PC-9 (cell line): ENCODE measurements at regions of chr11 and their contacts with region 1.

Region 1: GRCh38 chr11:13143486-13144297 is 133.9 kb upstream of the BMAL1 start:
- DNase-seq: peak in 1 of 2 experiments; percentile 81
- H3K4me3 ChIP-seq: no peak overlapping the region
- H3K27ac ChIP-seq: no peak overlapping the region
- H3K4me1 ChIP-seq: peaks cover 26% of the 10 kb centered on the region
- H3K27me3 ChIP-seq: no peaks in the 10 kb centered on the region
- CTCF ChIP-seq: no peak

Region 2: DNA sequence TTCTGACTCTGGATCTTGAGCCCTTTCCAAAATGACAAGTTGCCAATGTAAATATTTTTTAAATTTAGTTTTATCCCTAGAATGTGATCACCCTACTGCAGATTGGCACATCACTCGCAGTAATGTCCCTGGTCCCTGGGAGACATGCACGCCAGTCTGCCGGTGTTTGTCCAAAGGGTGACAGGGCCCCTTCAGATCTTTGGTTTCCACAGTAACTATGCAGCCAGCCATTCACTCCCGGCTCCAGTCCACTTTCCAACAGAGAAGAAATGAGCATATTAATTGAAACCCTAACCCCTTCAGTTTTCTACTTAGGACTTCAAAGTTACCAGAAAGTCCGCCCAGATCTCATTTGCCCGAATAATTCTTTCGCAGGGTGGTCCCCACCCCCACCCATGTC is 160.4 kb before region 1 on chr11:
- CTCF ChIA-PET with region 1: interaction called, 12 read pairs
- POLR2A ChIA-PET with region 1: no interaction called
- intact Hi-C with region 1: no loop called
- DNase-seq: no peak
- H3K4me3 ChIP-seq: no peak overlapping the region
- H3K27ac ChIP-seq: no peak overlapping the region
- H3K4me1 ChIP-seq: no peaks in the 10 kb centered on the region
- H3K27me3 ChIP-seq: no peaks in the 10 kb centered on the region
- CTCF ChIP-seq: no peak

Region 3: DNA sequence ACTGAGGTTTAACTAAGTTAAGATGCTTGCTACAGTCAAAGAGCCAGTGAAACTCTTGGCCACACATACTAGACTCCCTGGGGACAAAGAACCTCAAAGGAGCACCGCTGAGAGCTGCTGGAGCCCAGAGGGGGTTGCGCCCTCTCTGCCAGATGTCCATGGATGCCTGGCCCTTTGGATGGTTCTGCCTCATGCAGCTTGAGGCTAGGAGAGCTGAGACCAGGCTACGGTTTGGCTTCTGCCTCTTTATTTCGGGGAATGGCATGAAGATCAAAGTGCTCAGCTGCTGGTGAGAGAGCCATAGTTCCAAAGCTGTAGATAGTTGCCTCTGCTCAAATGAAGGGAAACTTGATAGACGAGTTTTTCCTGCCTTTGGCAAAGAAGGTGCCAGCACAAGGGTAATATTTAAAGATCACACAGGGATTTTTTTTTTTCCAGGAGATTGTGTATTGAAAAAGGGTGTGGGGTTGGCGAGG is 91.5 kb before region 1 on chr11:
- CTCF ChIA-PET with region 1: interaction called, 12 read pairs
- POLR2A ChIA-PET with region 1: no interaction called
- intact Hi-C with region 1: no loop called
- DNase-seq: peak; percentile 18 to 78
- H3K4me3 ChIP-seq: no peak overlapping the region
- H3K27ac ChIP-seq: 0 out of 2 replicates have a peak overlapping the region, but pooled peaks have one; percentile 11
- H3K4me1 ChIP-seq: peaks cover 31% of the 10 kb centered on the region
- H3K27me3 ChIP-seq: no peaks in the 10 kb centered on the region
- CTCF ChIP-seq: no peak

Region 4: DNA sequence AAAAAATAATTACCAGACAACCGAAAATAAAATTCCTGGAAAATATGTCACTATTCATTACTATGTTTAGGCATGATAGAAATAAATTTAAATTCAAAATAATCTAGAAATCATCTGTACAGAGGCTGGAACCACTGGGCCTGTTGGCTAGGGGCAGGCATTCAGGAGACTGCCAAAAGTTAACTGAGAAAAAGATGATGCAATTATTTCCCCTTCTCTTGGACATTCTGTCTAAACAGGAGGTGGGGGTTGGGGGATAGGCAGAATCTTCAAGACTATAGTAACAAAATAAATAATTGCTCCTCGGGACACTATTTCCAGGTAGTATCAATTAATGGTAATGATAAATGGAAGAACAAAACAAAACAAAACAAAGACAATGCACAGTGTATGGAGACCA is 305.2 kb after region 1 on chr11:
- CTCF ChIA-PET with region 1: no interaction called
- POLR2A ChIA-PET with region 1: no interaction called
- intact Hi-C with region 1: no loop called
- DNase-seq: no peak
- H3K4me3 ChIP-seq: no peak overlapping the region
- H3K27ac ChIP-seq: no peak overlapping the region
- H3K4me1 ChIP-seq: no peaks in the 10 kb centered on the region
- H3K27me3 ChIP-seq: no peaks in the 10 kb centered on the region
- CTCF ChIP-seq: no peak